Cardiac septum (tissue), 1 donor: ENCODE measurements at regions of chr11 and their contacts with region 1.

Region 1: GRCh38 chr11:86671682-86672621 is at the start of gene ME3:
- DNase-seq: peak; percentile 91
- total RNA-seq, gene ME3: 19.9 TPM

Region 2: DNA sequence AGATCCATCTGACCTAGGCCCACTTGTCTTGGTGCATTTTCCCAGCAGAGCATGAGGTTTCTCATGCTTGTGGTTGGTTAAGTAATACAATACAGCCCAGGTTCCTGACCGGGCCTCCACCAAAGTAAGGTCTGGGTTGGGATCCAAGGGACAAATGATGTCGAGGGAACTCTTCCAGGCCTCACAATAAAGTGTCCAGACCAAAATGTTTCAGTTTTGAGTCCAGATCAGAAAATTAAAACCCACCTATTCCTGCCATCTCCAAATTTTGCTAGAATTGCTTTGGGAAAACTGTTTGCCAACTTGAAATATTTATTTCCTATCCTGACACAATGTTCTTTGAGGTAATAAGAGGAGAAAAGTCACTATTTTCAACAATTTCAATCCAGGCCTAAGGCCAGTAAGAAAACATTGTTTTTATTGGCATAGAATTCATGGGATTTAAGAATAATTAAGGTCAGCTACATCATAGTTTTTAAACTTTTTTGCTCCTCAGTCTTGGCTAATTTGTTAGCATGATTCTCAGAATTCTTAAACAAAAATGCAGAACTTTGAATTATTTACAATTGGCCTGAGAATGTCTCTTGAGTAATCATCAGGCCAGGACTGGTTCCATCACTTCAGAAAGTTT is 50.9 kb before region 1 on chr11:
- intact Hi-C with region 1: loop called (anchors 5 kb)
- DNase-seq: no peak